IMR-90 (cell line): ENCODE measurements at regions of chr1 and their contacts with region 1.

Region 1: GRCh38 chr1:201605385-201606010 is 66.6 kb downstream of the NAV1 start:
- DNase-seq: peak; percentile 15
- ATAC-seq: no peak
- H3K4me3 ChIP-seq: no peak overlapping the region
- H3K27ac ChIP-seq: peak overlapping the region; percentile 84
- H3K4me1 ChIP-seq: peaks cover 45% of the 10 kb centered on the region
- H3K27me3 ChIP-seq: no peaks in the 10 kb centered on the region
- CTCF ChIP-seq: no peak
- POLR2A ChIP-seq: no peak
- RAD21 ChIP-seq: no peak

Region 2: DNA sequence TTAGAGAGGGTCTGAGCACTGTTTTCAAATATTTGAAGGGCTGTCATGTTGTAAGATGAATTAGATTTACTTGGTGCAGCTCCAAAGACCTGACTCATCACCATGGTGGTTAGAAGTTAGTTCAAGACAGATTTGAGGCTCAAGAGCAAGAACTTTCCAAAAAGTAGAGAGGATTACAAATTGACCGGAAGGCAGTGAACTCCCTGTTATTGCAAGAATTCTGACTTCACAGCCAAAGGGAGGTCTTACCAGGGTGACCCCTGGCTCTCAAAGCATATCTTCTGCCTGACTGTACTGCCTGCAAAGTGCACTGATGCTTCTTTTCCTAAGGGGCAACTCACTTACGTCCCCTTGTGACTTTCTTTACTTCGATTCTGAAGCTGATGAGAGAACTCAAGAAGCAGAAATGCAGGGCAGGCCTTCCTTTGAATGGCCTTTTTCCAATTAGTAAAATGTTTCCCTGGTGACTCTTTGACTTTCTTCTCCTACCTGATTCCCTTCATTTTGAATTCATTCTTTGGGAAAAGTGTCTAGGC is 19.8 kb after region 1 on chr1:
- CTCF ChIA-PET with region 1: interaction called, 4 read pairs
- POLR2A ChIA-PET with region 1: interaction called, 5 read pairs
- dilution Hi-C with region 1: no loop called
- in situ Hi-C with region 1: no loop called
- intact Hi-C with region 1: loop called (anchors 1 kb)
- DNase-seq: peak; percentile 98
- ATAC-seq: peak; percentile 93
- H3K4me3 ChIP-seq: no peak overlapping the region
- H3K27ac ChIP-seq: peak overlapping the region; percentile 2; the same call in 1 of the 2 replicates
- H3K4me1 ChIP-seq: peaks cover 15% of the 10 kb centered on the region
- H3K27me3 ChIP-seq: no peaks in the 10 kb centered on the region
- CTCF ChIP-seq: peak; percentile 59
- POLR2A ChIP-seq: no peak
- RAD21 ChIP-seq: peak; percentile 69